Vagina (tissue), 2 donors: ENCODE measurements at regions of chr6 and their contacts with region 1.

Region 1: GRCh38 chr6:84976526-84977420 is 212.4 kb upstream of the TBX18 start:
- DNase-seq: no peak
- H3K4me3 ChIP-seq: no peak overlapping the region
- H3K27ac ChIP-seq: no peak overlapping the region
- H3K4me1 ChIP-seq: no peaks in the 10 kb centered on the region
- H3K27me3 ChIP-seq: no peaks in the 10 kb centered on the region
- CTCF ChIP-seq: no peak
- POLR2A ChIP-seq: no peak

Region 2: DNA sequence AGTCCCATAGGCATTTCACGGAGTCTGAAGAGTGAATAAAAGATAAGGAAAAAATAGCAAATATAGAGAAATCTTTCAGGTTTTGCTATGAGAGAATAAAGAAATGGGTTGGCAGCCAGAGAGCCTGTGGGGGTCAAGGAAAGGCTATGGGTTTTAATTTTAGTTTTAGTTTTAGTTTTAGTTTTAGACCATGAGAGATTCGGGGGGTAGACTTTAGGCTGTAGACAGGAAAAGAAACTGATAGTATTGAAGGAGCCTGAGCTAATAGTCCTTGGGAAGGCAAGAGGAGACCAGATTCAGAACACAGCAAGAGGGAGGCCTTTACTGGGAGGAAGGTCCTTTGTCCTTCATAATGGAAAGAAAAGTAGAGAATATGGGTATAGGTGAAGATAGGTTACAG is 1890.0 kb before region 1 on chr6:
- intact Hi-C with region 1: loop called (anchors 10 kb)
- DNase-seq: no peak
- H3K4me3 ChIP-seq: no peak overlapping the region
- H3K27ac ChIP-seq: no peak overlapping the region
- H3K4me1 ChIP-seq: no peaks in the 10 kb centered on the region
- H3K27me3 ChIP-seq: no peaks in the 10 kb centered on the region
- CTCF ChIP-seq: no peak
- POLR2A ChIP-seq: no peak